AG04449 (cell line): ENCODE measurements at regions of chr14 and their contacts with region 1.

Region 1: GRCh38 chr14:69726761-69727511 is 40.0 kb upstream of the SRSF5 start:
- DNase-seq: no peak
- H3K4me3 ChIP-seq: peak overlapping the region; percentile 51
- CTCF ChIP-seq: peak; percentile 98

Region 2: GRCh38 chr14:69535230-69535848 is 191.6 kb before region 1 on chr14:
- CTCF ChIA-PET with region 1: interaction called, 10 read pairs
- POLR2A ChIA-PET with region 1: no interaction called
- DNase-seq: no peak
- H3K4me3 ChIP-seq: no peak overlapping the region
- CTCF ChIP-seq: peak; percentile 80

Region 3: GRCh38 chr14:69580009-69580577 is 146.8 kb before region 1 on chr14:
- CTCF ChIA-PET with region 1: interaction called, 210 read pairs
- POLR2A ChIA-PET with region 1: interaction called, 3 read pairs
- DNase-seq: peak; percentile 42
- H3K4me3 ChIP-seq: no peak overlapping the region
- CTCF ChIP-seq: peak; percentile 69

Region 4: DNA sequence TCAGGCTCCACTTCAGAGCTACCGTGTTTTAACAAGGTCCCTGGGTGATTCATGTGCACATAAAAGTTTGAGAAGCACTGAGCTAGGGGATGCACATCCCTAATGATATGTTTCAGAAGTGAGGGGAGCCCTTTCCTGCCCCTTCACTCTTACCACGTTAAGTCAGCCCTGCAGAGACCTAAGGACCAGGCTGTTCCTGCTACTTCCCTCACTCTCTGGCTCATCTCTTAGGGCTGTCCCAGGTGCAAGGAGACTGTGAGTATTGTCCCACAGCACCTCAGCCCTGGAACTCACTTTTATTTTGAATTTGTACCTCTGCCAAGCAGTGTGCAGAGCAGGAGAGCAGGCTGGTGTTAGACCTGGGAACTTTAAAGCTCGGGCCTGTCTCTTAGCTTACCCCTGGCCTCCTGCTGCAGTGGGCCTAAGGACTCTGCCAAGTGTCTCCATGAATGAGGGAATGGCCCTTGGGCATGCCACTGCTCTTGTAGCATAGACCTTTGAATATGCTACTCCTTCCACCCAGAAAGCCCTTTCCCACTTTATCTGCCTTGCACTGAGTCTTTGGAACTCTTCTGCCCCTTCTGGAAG is 126.5 kb before region 1 on chr14:
- CTCF ChIA-PET with region 1: interaction called, 79 read pairs
- POLR2A ChIA-PET with region 1: no interaction called
- DNase-seq: no peak
- H3K4me3 ChIP-seq: no peak overlapping the region
- CTCF ChIP-seq: no peak

Region 5: DNA sequence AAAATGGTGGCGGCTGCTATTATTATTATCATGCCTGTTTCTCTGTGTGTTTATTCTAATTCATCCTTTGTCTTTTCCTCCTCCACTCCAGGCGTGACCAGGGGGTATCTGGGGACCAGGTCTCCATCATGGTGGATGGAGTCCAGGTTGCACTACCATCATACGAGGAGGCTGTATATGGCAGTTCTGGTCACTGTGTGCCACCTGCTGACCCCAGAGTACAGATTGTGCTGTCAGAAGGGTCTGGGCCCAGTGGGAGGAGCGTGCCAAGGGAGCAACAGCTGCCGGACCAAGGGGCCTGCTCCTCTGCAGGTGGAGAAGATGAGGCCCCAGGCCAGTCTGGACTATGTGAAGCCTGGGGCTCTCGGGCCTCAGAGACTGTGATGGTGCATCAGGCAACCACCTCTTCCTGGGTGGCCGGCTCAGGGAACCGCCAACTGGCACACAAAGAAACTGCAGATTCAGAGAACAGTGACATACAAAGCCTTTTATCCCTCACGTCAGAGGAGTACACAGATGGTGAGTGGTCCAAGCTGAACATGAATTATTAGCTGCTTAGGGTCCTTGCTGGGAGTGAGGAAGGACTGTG is 18.3 kb before region 1 on chr14:
- CTCF ChIA-PET with region 1: interaction called, 11 read pairs
- POLR2A ChIA-PET with region 1: no interaction called
- DNase-seq: no peak
- H3K4me3 ChIP-seq: no peak overlapping the region
- CTCF ChIP-seq: peak; percentile 25